GM12878 (cell line): ENCODE measurements at regions of chr12 and their contacts with region 1.

Region 1: DNA sequence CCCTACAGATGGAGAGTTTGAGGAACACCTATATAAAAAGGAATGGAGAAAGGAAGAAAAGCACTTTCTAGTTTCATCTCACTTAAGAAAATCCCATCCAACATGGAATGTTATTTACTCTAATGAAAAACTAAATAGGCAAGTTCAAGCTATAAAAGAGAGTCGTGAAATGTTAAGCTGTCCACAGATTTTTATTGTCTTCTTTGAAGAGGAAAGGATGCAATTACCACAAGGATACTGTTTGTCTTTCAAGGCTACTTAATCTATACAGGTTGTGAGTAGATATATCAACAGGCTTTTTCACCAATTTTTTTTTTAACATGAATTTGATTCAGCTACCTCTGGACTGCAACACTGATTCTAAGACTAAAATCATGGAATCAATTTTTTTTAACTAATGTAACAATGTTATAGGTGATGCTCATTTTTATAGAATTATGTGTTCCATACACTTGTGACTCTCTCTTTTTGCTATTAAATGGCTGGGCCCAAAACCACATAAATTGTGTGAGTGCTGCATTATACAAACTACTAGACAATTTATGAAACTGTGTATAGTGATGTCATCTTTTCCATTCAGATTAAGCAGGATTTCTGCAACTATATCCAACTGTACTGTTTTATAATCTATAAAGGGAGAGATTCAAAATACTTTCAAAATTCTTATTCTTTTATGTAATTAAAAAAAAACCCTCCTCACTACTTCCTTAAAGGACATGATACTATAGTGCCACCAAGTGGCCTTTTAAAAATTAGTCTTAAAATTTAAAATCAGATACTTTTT is 26.8 kb upstream of the BMAL2 start:
- DNase-seq: no peak
- ATAC-seq: peak; percentile 26; the same call in 2 of the 3 replicates
- H3K4me3 ChIP-seq: no peak overlapping the region
- H3K27ac ChIP-seq: no peak overlapping the region
- H3K4me1 ChIP-seq: peaks cover 35% of the 10 kb centered on the region
- H3K27me3 ChIP-seq: no peaks in the 10 kb centered on the region
- CTCF ChIP-seq: peak in 1 of 3 experiments; percentile 15; a peak in 1 of 6 replicates
- EP300 ChIP-seq: no peak
- POLR2A ChIP-seq: no peak
- RAD21 ChIP-seq: peak; percentile 54; the same call in 1 of the 2 replicates

Region 2: DNA sequence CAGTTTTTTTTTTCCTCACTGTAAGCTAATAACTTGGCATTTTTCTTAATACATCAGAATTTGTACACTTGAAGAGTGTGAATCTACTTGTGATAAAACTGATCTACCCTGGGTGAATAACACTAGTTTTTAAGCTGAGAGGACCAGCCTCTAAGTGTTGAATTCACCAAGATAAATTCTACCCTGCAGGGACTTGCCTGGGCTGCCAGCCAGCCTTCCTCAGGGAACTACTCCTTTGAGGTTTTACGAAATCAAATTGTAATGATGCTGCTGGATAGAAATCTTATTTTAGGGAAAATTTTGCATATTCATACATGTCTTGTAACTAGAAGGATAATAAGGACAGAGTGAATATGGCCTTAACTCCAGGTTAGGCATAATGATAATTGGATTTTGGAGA is 281.6 kb before region 1 on chr12:
- CTCF ChIA-PET with region 1: interaction called, 294 read pairs
- POLR2A ChIA-PET with region 1: interaction called, 10 read pairs
- RAD21 ChIA-PET with region 1: interaction called, 81 read pairs
- SMC1A ChIA-PET with region 1: interaction called, 198 read pairs
- in situ Hi-C with region 1: loop called (anchors 5 kb)
- intact Hi-C with region 1: no loop called
- DNase-seq: no peak
- ATAC-seq: no peak
- H3K4me3 ChIP-seq: peak overlapping the region; percentile 91; the same call in 1 of the 2 replicates
- H3K27ac ChIP-seq: no peak overlapping the region
- H3K4me1 ChIP-seq: peaks cover 4% of the 10 kb centered on the region; the same call in 1 of the 2 replicates
- H3K27me3 ChIP-seq: no peaks in the 10 kb centered on the region
- CTCF ChIP-seq: no peak
- EP300 ChIP-seq: no peak
- POLR2A ChIP-seq: no peak
- RAD21 ChIP-seq: no peak

Region 3: GRCh38 chr12:27161458-27162228 is 144.2 kb before region 1 on chr12:
- CTCF ChIA-PET with region 1: interaction called, 12 read pairs
- POLR2A ChIA-PET with region 1: no interaction called
- RAD21 ChIA-PET with region 1: interaction called, 9 read pairs
- SMC1A ChIA-PET with region 1: interaction called, 30 read pairs
- in situ Hi-C with region 1: no loop called
- intact Hi-C with region 1: no loop called
- DNase-seq: peak; percentile 62
- ATAC-seq: peak; percentile 93
- H3K4me3 ChIP-seq: peak overlapping the region; percentile 15; the same call in 1 of the 2 replicates
- H3K27ac ChIP-seq: peak overlapping the region; percentile 64
- H3K4me1 ChIP-seq: peaks cover 3% of the 10 kb centered on the region; the same call in 1 of the 2 replicates
- H3K27me3 ChIP-seq: no peaks in the 10 kb centered on the region
- CTCF ChIP-seq: no peak
- EP300 ChIP-seq: no peak
- POLR2A ChIP-seq: no peak
- RAD21 ChIP-seq: no peak

Region 4: DNA sequence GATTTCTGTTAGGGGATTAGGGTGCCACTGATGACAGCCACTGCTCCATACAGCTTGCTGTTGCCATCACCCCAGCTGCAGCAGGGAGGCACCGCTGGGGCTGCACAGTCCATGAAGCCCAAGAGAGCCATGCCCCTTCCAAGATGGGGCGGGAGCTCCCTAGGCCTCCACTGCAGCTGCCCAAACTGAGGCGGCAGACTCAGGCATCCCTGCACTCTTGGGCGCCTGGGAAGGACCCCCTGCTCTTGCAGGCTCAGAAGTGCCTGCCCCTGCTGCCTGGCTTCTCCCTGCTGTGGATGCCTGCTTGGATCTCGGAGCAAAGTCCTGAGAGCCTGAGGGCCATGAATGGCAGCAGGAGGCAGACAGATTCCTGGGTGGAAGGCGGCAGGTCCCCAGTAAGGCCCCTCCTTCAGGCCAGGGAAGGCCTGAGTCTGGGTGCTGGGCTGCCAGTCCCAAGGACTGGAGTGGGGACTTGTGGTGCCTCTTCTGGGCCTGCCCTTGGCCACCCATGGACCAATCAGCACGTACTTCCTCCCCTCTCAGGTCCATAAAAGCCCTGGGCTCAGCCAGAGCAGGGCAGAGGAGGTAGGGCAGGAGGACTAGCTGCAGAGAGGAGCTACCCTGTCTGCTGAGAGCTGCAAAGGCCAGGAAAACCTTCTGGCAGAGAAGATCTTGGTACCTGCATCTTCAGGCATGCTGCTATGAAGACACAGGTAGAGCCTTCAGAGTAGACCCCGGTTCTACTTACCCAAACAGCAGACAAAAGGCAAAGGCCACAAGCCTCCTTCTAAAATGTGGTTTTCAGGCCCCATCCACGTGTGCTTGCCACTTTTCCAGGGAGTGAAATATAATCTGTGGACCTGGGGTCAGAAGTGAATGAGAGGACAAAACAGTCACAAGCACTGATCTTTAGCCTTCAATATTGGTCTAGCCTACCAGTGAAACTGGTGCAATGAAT is 91.8 kb before region 1 on chr12:
- CTCF ChIA-PET with region 1: interaction called, 25 read pairs
- POLR2A ChIA-PET with region 1: interaction called, 3 read pairs
- RAD21 ChIA-PET with region 1: interaction called, 25 read pairs
- SMC1A ChIA-PET with region 1: interaction called, 34 read pairs
- in situ Hi-C with region 1: no loop called
- intact Hi-C with region 1: loop called (anchors 5 kb)
- DNase-seq: no peak
- ATAC-seq: no peak
- H3K4me3 ChIP-seq: no peak overlapping the region
- H3K27ac ChIP-seq: no peak overlapping the region; the same call in 1 of the 2 replicates
- H3K4me1 ChIP-seq: peaks cover 12% of the 10 kb centered on the region
- H3K27me3 ChIP-seq: no peaks in the 10 kb centered on the region
- CTCF ChIP-seq: no peak
- EP300 ChIP-seq: no peak
- POLR2A ChIP-seq: no peak
- RAD21 ChIP-seq: no peak

Region 5: GRCh38 chr12:27272701-27273028 is 33.2 kb before region 1 on chr12:
- CTCF ChIA-PET with region 1: interaction called, 125 read pairs
- POLR2A ChIA-PET with region 1: interaction called, 5 read pairs
- RAD21 ChIA-PET with region 1: interaction called, 215 read pairs
- SMC1A ChIA-PET with region 1: interaction called, 38 read pairs
- in situ Hi-C with region 1: no loop called
- intact Hi-C with region 1: no loop called
- DNase-seq: no peak
- ATAC-seq: peak; percentile 69
- H3K4me3 ChIP-seq: no peak overlapping the region
- H3K27ac ChIP-seq: no peak overlapping the region
- H3K4me1 ChIP-seq: peaks cover 16% of the 10 kb centered on the region
- H3K27me3 ChIP-seq: no peaks in the 10 kb centered on the region
- CTCF ChIP-seq: no peak
- EP300 ChIP-seq: peak in 1 of 2 experiments; percentile 34; a peak in 1 of 4 replicates
- POLR2A ChIP-seq: no peak
- RAD21 ChIP-seq: no peak

Region 6: GRCh38 chr12:27324530-27324929 is 18.7 kb after region 1 on chr12:
- CTCF ChIA-PET with region 1: interaction called, 41 read pairs
- POLR2A ChIA-PET with region 1: interaction called, 3 read pairs
- RAD21 ChIA-PET with region 1: interaction called, 64 read pairs
- SMC1A ChIA-PET with region 1: interaction called, 207 read pairs
- in situ Hi-C with region 1: no loop called
- intact Hi-C with region 1: no loop called
- DNase-seq: no peak
- ATAC-seq: no peak
- H3K4me3 ChIP-seq: no peak overlapping the region
- H3K27ac ChIP-seq: no peak overlapping the region
- H3K4me1 ChIP-seq: peaks cover 9% of the 10 kb centered on the region
- H3K27me3 ChIP-seq: no peaks in the 10 kb centered on the region
- CTCF ChIP-seq: no peak
- EP300 ChIP-seq: no peak
- POLR2A ChIP-seq: no peak
- RAD21 ChIP-seq: no peak

Region 7: DNA sequence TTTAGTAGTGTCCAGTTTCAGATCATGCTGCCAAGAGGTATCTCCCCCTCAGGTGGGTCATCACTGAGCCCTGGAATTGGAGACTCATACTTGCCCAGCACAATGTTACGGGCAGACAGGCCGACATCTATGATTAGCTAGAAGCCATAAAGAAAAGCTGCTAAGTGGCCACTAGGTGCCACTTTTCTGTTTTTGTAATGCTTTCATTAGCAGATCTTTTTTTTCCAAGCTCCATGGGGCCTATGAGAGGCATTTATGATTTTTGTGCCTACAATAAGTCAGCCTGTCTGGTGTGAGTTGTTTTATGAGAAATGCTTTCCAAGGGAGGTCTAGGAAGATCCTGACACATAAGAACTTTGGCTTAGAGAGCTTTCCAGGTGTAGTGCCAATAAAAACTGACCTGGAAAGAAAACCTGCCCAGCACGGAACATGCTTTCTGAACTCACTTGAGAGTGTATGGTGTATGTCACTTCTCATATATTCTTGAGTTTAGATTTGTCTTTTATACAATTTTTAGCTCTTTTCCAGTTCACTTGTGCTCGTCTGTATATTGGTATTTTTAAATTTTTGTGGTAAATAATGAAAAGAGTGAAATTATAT is 118.9 kb after region 1 on chr12:
- CTCF ChIA-PET with region 1: no interaction called
- POLR2A ChIA-PET with region 1: no interaction called
- RAD21 ChIA-PET with region 1: no interaction called
- SMC1A ChIA-PET with region 1: no interaction called
- in situ Hi-C with region 1: no loop called
- intact Hi-C with region 1: no loop called
- DNase-seq: no peak
- ATAC-seq: peak; percentile 62
- H3K4me3 ChIP-seq: no peak overlapping the region
- H3K27ac ChIP-seq: no peak overlapping the region
- H3K4me1 ChIP-seq: no peaks in the 10 kb centered on the region
- H3K27me3 ChIP-seq: no peaks in the 10 kb centered on the region
- CTCF ChIP-seq: peak; percentile 38 to 48 (median 39); a peak in 5 of 6 replicates
- EP300 ChIP-seq: no peak
- POLR2A ChIP-seq: no peak
- RAD21 ChIP-seq: peak; percentile 45

Region 8: DNA sequence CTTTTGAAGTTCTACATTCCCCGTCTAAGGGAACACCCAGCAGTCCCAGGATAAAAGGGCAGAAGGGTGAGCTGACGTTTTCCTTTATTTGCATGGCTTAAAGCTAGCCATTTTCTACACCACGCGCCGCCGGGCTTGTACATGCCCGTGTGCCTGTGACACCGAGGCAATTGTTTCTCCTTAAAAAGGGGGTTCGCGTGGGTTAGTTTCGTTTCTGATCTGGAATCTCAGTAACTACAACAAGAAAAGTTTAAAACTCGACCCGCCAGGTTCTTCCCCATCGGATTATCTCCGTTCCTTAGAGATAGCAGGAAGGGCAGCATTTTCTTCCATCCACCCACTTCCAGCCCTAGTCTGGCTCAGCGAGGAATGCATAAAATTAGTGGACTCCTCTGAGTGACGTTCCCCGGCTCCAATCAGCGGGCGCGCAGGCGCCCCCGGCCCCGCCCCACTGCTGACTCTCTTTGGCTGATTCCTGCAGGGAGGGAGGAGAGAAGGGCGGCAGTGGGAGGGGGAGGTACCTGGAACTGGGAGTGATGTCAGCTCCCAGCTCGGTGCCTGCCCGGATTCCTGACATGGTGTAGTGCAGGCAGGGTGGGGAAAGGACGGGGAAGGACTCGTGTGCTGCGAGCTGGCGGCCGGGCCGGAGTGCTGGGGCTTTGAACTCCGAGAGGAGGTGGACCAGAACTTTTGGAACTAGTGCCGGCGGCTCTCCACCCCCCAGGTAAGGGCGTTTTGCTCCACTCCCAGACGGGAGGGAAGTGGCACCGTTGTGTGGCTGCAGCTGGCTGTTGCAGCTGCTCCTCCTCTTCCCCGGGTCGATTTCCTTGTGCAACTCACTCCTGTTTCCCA is 218.0 kb after region 1 on chr12 and contains the start of gene PPFIBP1:
- CTCF ChIA-PET with region 1: no interaction called
- POLR2A ChIA-PET with region 1: no interaction called
- RAD21 ChIA-PET with region 1: no interaction called
- SMC1A ChIA-PET with region 1: no interaction called
- in situ Hi-C with region 1: no loop called
- intact Hi-C with region 1: no loop called
- DNase-seq: peak; percentile 91
- ATAC-seq: peak; percentile 98
- H3K4me3 ChIP-seq: peak within 1 kb of the TSS; percentile 73
- H3K27ac ChIP-seq: peak within 1 kb of the TSS; percentile 58
- H3K4me1 ChIP-seq: no peaks in the 10 kb centered on the region
- H3K27me3 ChIP-seq: no peaks in the 10 kb centered on the region
- CTCF ChIP-seq: peak in 1 of 3 experiments; percentile 23; a peak in 2 of 6 replicates
- EP300 ChIP-seq: no peak
- POLR2A ChIP-seq: peak; percentile 80
- RAD21 ChIP-seq: peak; percentile 43
- polyA plus RNA-seq, gene PPFIBP1: 0.47 to 0.55 TPM

Region 9: GRCh38 chr12:27807063-27807703 is 501.3 kb after region 1 on chr12:
- CTCF ChIA-PET with region 1: no interaction called
- POLR2A ChIA-PET with region 1: no interaction called
- RAD21 ChIA-PET with region 1: no interaction called
- SMC1A ChIA-PET with region 1: no interaction called
- in situ Hi-C with region 1: no loop called
- intact Hi-C with region 1: no loop called
- DNase-seq: no peak
- ATAC-seq: no peak
- H3K4me3 ChIP-seq: no peak overlapping the region
- H3K27ac ChIP-seq: no peak overlapping the region
- H3K4me1 ChIP-seq: no peaks in the 10 kb centered on the region
- H3K27me3 ChIP-seq: no peaks in the 10 kb centered on the region
- CTCF ChIP-seq: no peak
- EP300 ChIP-seq: no peak
- POLR2A ChIP-seq: no peak
- RAD21 ChIP-seq: no peak